Sciatic nerve (tissue), 2 donors: ENCODE measurements at regions of chr17 and their contacts with region 1.

Region 1: GRCh38 chr17:7844292-7845154 is 10.3 kb upstream of the TMEM88 start:
- DNase-seq: peak; percentile 93
- ATAC-seq: peak; percentile 81

Region 2: DNA sequence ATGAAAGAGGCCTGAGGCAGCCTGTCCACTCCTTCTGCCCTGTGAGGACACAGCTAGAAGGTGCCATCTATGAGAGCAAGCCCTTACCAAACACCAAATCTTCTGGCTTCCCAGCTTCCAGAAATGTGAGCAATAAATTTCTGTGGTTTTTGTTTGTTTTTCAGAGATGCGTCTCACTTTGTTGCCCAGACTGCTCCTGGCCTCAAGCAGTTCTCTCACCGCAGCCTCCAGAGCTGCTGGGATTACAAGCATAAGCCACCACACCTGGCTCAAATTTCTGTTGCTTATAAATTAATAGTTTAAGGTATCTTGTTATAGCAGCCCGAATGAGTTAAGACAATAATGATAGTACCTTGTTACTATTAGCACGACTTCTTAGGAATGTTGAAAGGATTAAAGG is 788.1 kb before region 1 on chr17:
- intact Hi-C with region 1: no loop called
- DNase-seq: no peak
- ATAC-seq: no peak

Region 3: GRCh38 chr17:7809086-7809790 is 35.3 kb before region 1 on chr17:
- intact Hi-C with region 1: no loop called
- DNase-seq: no peak
- ATAC-seq: no peak

Region 4: DNA sequence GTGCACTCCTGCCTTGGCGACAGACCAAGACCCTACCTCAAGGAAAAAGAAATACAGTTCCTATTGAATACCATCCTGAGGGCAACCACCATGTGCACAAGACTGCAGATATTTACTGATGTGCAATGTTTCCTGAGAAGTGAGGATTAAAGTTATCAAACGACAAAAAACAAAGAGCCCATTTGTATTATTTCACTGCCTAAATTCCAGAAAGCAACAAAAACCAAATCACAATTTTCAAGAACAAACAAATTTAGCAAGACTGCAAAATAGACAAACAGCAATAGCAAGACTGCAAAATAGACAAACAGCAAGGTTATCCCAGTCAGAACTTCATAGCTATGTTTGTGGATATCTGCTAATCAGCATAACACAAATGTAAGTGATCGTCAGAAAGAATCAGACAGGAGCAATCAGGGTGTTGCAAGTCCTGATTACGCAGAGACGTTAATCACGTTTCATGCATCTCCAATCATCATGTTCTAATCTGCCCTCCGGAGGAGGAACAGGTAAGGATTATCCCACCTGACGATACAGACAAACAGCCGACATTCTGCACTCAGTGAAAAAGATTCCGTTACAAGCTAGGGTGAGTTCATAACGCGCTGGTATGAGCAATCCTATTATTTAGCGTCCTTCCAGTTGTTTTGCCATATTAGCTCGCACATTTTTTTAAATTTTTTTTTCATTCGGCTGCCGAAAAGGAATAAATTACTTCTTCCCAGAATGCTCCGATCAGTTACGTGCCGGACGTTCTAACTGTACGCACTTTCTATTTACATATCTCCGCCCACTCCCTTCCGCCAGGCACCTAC is 328.7 kb after region 1 on chr17:
- intact Hi-C with region 1: loop called (anchors 5 kb)
- DNase-seq: peak; percentile 84
- ATAC-seq: peak; percentile 88